OCI-LY7 (cell line): ENCODE measurements at regions of chr7 and their contacts with region 1.

Region 1: GRCh38 chr7:5284304-5285281 is 1.9 kb downstream of the SLC29A4 start:
- DNase-seq: peak; percentile 72
- H3K4me3 ChIP-seq: no peak overlapping the region
- H3K27ac ChIP-seq: no peak overlapping the region
- H3K4me1 ChIP-seq: no peaks in the 10 kb centered on the region
- CTCF ChIP-seq: peak; percentile 70

Region 2: DNA sequence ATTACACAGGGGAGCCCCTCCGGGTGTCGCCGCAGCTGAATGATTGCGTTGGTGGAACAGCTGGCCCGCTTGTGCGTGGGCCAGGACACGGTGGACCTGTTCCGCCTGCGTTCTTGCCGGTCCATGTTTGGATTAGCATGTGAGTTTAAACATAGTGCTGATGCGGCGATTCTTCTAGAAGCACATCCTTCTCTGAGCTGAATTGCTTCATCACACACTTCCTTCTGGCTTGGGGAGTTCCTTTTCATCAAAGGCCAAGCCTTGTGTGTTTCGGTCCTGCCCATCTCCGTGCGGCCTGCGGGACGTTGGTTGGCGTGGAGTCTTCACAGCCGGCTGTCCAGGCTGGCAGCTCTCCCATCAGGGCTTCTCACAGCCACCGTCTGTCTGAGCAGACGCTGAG is 47.3 kb before region 1 on chr7:
- CTCF ChIA-PET with region 1: interaction called, 4 read pairs
- POLR2A ChIA-PET with region 1: no interaction called
- intact Hi-C with region 1: loop called (anchors 1 kb)
- DNase-seq: no peak
- H3K4me3 ChIP-seq: no peak overlapping the region
- H3K27ac ChIP-seq: no peak overlapping the region
- H3K4me1 ChIP-seq: peaks cover 38% of the 10 kb centered on the region
- CTCF ChIP-seq: no peak

Region 3: GRCh38 chr7:5270788-5271187 is 13.8 kb before region 1 on chr7:
- CTCF ChIA-PET with region 1: no interaction called
- POLR2A ChIA-PET with region 1: no interaction called
- intact Hi-C with region 1: no loop called
- DNase-seq: no peak
- H3K4me3 ChIP-seq: no peak overlapping the region
- H3K27ac ChIP-seq: no peak overlapping the region
- H3K4me1 ChIP-seq: no peaks in the 10 kb centered on the region
- CTCF ChIP-seq: no peak